CD4-positive, alpha-beta T cell (primary cell): ENCODE measurements at regions of chr5 and their contacts with region 1.

Region 1: GRCh38 chr5:134527146-134527960 is 1.9 kb downstream of the JADE2 start:
- DNase-seq: peak; percentile 43 to 86 (median 60)
- ATAC-seq: peak; percentile 31
- H3K4me3 ChIP-seq: peak overlapping the region; percentile 81
- H3K4me3 Mint-ChIP-seq: peak overlapping the region; percentile 99
- H3K27ac ChIP-seq: peak overlapping the region; percentile 62 to 99
- H3K27ac Mint-ChIP-seq: peak overlapping the region; percentile 100
- H3K4me1 ChIP-seq: peaks cover 64% of the 10 kb centered on the region
- H3K4me1 Mint-ChIP-seq: peaks cover 59% of the 10 kb centered on the region
- H3K27me3 ChIP-seq: no peaks in the 10 kb centered on the region
- H3K27me3 Mint-ChIP-seq: no peaks in the 10 kb centered on the region
- CTCF ChIP-seq: peak; percentile 76

Region 2: GRCh38 chr5:133219296-133219695 is 1308.1 kb before region 1 on chr5:
- CTCF ChIA-PET with region 1: no interaction called
- POLR2A ChIA-PET with region 1: no interaction called
- intact Hi-C with region 1: no loop called
- DNase-seq: peak in 1 of 14 experiments; percentile 20
- ATAC-seq: no peak
- H3K4me3 ChIP-seq: no peak overlapping the region
- H3K4me3 Mint-ChIP-seq: no peak overlapping the region
- H3K27ac ChIP-seq: no peak overlapping the region
- H3K27ac Mint-ChIP-seq: no peak overlapping the region
- H3K4me1 ChIP-seq: no peaks in the 10 kb centered on the region
- H3K4me1 Mint-ChIP-seq: no peaks in the 10 kb centered on the region
- H3K27me3 ChIP-seq: no peaks in the 10 kb centered on the region
- H3K27me3 Mint-ChIP-seq: no peaks in the 10 kb centered on the region
- CTCF ChIP-seq: no peak

Region 3: GRCh38 chr5:134176511-134177368 is 350.6 kb before region 1 on chr5 and contains the start of gene SKP1:
- CTCF ChIA-PET with region 1: no interaction called
- POLR2A ChIA-PET with region 1: interaction called, 21 read pairs
- intact Hi-C with region 1: loop called in 1 of 2 experiments (anchors 10 kb)
- DNase-seq: peak; percentile 76 to 94 (median 86)
- ATAC-seq: peak; percentile 83
- H3K4me3 ChIP-seq: peak within 1 kb of the TSS; percentile 98
- H3K4me3 Mint-ChIP-seq: peak within 1 kb of the TSS; percentile 97
- H3K27ac ChIP-seq: peak within 1 kb of the TSS; percentile 98 to 99
- H3K27ac Mint-ChIP-seq: peak within 1 kb of the TSS; percentile 98
- H3K4me1 ChIP-seq: peaks cover 19% of the 10 kb centered on the region
- H3K4me1 Mint-ChIP-seq: peaks cover 36% of the 10 kb centered on the region
- H3K27me3 ChIP-seq: no peaks in the 10 kb centered on the region
- H3K27me3 Mint-ChIP-seq: no peaks in the 10 kb centered on the region
- CTCF ChIP-seq: no peak
- total RNA-seq, gene SKP1: 303 to 314 TPM

Region 4: DNA sequence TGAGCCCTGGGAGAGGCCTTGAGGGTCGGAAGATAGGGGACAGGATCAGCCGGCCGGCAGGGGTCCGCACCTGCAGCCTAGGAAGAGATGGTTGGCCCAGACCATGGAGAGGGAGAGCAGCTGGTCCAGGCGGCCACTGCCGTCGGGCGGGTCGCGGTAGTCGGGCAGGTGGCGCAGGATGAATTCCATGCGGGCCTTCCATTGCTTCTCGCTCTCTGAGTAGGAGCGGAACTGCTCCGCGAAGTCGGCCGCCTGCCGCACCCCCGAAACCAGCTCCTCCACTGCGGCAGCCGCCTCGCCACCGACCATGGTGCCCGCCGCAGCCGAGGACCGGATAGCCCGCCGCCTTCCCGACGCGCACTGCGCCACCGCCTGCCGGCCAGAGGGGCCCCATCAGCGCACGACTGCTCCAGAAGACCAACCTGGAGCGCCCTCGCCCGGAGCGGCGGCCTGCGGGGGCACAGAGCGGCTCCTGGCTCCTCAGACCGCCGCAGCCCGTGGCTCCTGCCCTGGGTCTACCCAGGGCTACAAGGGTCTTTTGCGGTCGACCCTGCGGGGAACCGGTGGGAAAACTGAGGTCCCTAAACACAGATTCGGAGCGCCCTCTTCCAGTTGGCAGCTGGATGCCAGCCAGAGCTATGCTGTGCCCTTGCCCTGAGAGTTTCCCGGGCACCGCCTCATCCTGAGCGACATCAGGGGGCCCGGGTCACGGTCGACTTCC is 115.6 kb before region 1 on chr5 and contains the start of gene CDKN2AIPNL:
- CTCF ChIA-PET with region 1: interaction called, 26 read pairs
- POLR2A ChIA-PET with region 1: interaction called, 164 read pairs
- intact Hi-C with region 1: loop called (anchors 1 kb)
- DNase-seq: peak; percentile 84 to 94 (median 90)
- ATAC-seq: peak; percentile 99
- H3K4me3 ChIP-seq: peak within 1 kb of the TSS; percentile 81
- H3K4me3 Mint-ChIP-seq: peak within 1 kb of the TSS; percentile 87
- H3K27ac ChIP-seq: peak within 1 kb of the TSS; percentile 53 to 64
- H3K27ac Mint-ChIP-seq: peak within 1 kb of the TSS; percentile 81
- H3K4me1 ChIP-seq: peaks cover 25% of the 10 kb centered on the region
- H3K4me1 Mint-ChIP-seq: peaks cover 42% of the 10 kb centered on the region
- H3K27me3 ChIP-seq: no peaks in the 10 kb centered on the region
- H3K27me3 Mint-ChIP-seq: no peaks in the 10 kb centered on the region
- CTCF ChIP-seq: peak; percentile 79
- total RNA-seq, gene CDKN2AIPNL: 12.8 to 15.5 TPM

Region 5: GRCh38 chr5:134541736-134542376 is 14.5 kb after region 1 on chr5:
- CTCF ChIA-PET with region 1: interaction called, 36 read pairs
- POLR2A ChIA-PET with region 1: interaction called, 24 read pairs
- intact Hi-C with region 1: loop called in 1 of 2 experiments (anchors 2 kb)
- DNase-seq: peak in 1 of 14 experiments; percentile 31
- ATAC-seq: no peak
- H3K4me3 ChIP-seq: no peak overlapping the region
- H3K4me3 Mint-ChIP-seq: peak overlapping the region; percentile 42
- H3K27ac ChIP-seq: no peak overlapping the region
- H3K27ac Mint-ChIP-seq: peak overlapping the region; percentile 53
- H3K4me1 ChIP-seq: peaks cover 65% of the 10 kb centered on the region
- H3K4me1 Mint-ChIP-seq: peaks cover 50% of the 10 kb centered on the region
- H3K27me3 ChIP-seq: no peaks in the 10 kb centered on the region
- H3K27me3 Mint-ChIP-seq: no peaks in the 10 kb centered on the region
- CTCF ChIP-seq: no peak

Region 6: GRCh38 chr5:134586866-134587524 is 59.6 kb after region 1 on chr5:
- CTCF ChIA-PET with region 1: interaction called, 11 read pairs
- POLR2A ChIA-PET with region 1: interaction called, 6 read pairs
- intact Hi-C with region 1: no loop called
- DNase-seq: peak; percentile 72 to 88 (median 79)
- ATAC-seq: peak; percentile 97
- H3K4me3 ChIP-seq: no peak overlapping the region
- H3K4me3 Mint-ChIP-seq: peak overlapping the region; percentile 3
- H3K27ac ChIP-seq: no peak overlapping the region
- H3K27ac Mint-ChIP-seq: peak overlapping the region; percentile 28
- H3K4me1 ChIP-seq: peaks cover 7% of the 10 kb centered on the region
- H3K4me1 Mint-ChIP-seq: peaks cover 16% of the 10 kb centered on the region
- H3K27me3 ChIP-seq: no peaks in the 10 kb centered on the region
- H3K27me3 Mint-ChIP-seq: no peaks in the 10 kb centered on the region
- CTCF ChIP-seq: peak; percentile 84

Region 7: DNA sequence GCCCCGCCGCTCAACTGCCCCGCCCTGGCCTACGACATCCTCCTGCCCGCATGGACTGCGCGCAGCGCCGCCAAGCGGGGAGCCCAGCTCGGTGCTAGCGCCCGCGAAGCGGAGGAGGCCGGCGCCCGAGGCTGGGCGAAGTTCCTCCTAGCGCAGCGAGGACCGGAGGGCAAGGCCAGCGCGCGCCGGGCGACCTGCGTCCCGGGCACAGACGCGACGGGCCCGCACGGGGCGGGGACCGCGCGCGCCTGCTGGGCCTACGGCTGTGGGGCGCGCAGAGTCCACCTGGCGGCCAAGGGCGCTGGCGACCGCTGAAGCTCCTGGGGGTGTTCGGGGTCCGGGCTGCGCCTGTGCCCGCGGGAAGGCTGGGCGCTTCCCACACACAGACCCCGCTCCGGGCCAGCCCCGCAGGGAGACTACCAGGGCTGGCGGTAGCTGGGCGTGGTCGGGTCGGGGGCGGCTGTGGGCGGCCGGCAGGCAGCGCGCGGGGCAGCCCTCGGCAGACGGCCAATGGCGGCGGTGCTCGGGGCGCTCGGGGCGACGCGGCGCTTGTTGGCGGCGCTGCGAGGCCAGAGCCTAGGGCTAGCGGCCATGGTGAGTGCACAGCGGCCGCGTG is 377.4 kb after region 1 on chr5 and contains the start of gene PCBD2:
- CTCF ChIA-PET with region 1: no interaction called
- POLR2A ChIA-PET with region 1: interaction called, 9 read pairs
- intact Hi-C with region 1: loop called in 1 of 2 experiments (anchors 10 kb)
- DNase-seq: peak; percentile 83 to 96 (median 90)
- ATAC-seq: peak; percentile 85
- H3K4me3 ChIP-seq: peak within 1 kb of the TSS; percentile 87
- H3K4me3 Mint-ChIP-seq: peak within 1 kb of the TSS; percentile 99
- H3K27ac ChIP-seq: peak within 1 kb of the TSS; percentile 83 to 85
- H3K27ac Mint-ChIP-seq: peak within 1 kb of the TSS; percentile 95
- H3K4me1 ChIP-seq: peaks cover 22% of the 10 kb centered on the region
- H3K4me1 Mint-ChIP-seq: peaks cover 15% of the 10 kb centered on the region
- H3K27me3 ChIP-seq: no peaks in the 10 kb centered on the region
- H3K27me3 Mint-ChIP-seq: no peaks in the 10 kb centered on the region
- CTCF ChIP-seq: peak; percentile 81
- total RNA-seq, gene PCBD2: 5.2 to 5.8 TPM

Region 8: GRCh38 chr5:135930029-135930948 is 1402.9 kb after region 1 on chr5:
- CTCF ChIA-PET with region 1: no interaction called
- POLR2A ChIA-PET with region 1: no interaction called
- intact Hi-C with region 1: no loop called
- DNase-seq: no peak
- ATAC-seq: no peak
- H3K4me3 ChIP-seq: no peak overlapping the region
- H3K4me3 Mint-ChIP-seq: no peak overlapping the region
- H3K27ac ChIP-seq: no peak overlapping the region
- H3K27ac Mint-ChIP-seq: no peak overlapping the region
- H3K4me1 ChIP-seq: no peaks in the 10 kb centered on the region
- H3K4me1 Mint-ChIP-seq: no peaks in the 10 kb centered on the region
- H3K27me3 ChIP-seq: peaks cover 22 to 46% of the 10 kb centered on the region in 2 experiments
- H3K27me3 Mint-ChIP-seq: peaks cover 62% of the 10 kb centered on the region
- CTCF ChIP-seq: no peak